Naive thymus-derived CD8-positive, alpha-beta T cell (primary cell): ENCODE measurements at regions of chr12 and their contacts with region 1.

Region 1: DNA sequence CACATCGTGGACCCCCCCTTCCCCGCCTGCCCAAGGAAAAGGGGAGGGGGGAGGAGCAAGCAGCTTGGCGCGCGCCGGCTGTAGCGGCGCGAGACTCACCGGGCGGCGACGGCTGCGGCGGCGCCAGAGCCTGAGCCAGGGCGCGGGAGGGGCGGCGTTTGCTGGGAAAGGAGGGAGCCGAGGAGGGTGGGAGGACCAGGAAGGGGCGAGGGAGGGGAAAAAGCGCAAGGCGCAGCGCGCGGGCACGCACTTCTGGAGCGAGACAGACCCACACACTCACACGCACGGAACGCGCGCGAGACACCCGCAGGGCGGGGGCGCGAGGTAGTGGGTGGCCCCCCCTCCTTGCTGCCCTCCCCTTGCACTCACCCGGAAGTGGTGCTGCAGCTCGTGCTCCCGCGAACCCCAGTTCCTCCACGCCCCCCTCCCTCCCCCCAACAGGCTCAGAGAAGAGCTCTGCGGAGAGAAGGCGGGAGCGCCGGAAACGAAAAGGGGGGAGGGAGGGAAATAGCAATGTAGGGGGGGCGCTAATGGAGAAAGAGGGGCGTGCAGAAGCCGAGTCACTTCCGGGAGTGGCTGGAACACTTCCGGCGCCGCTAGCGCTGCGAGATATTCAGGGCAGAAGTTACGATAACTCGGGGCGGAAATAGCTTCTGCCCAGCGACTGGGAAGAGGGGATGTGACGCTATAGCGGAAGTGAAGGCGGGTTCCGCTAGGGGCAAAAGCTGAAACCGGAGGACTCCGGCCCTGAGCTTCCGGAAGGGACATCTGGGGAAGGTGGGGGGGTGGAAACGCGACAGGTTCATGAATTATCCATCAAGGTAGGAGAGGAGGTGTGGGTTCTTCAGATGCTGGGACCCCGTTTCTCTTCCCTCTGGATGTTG is at the start of gene ZNF384:
- DNase-seq: peak; percentile 85 to 98 (median 96)
- ATAC-seq: peak; percentile 78 to 83
- H3K4me3 Mint-ChIP-seq: peak within 1 kb of the TSS; percentile 81 to 97 (median 92)
- H3K27ac Mint-ChIP-seq: peak within 1 kb of the TSS; percentile 89 to 99 (median 96)
- H3K4me1 Mint-ChIP-seq: peaks cover 36 to 67% (median 58%) of the 10 kb centered on the region in 4 donors
- H3K27me3 Mint-ChIP-seq: no peaks in the 10 kb centered on the region
- polyA plus RNA-seq, gene ZNF384: 17.6 to 39.6 (median 26.3) TPM

Region 2: DNA sequence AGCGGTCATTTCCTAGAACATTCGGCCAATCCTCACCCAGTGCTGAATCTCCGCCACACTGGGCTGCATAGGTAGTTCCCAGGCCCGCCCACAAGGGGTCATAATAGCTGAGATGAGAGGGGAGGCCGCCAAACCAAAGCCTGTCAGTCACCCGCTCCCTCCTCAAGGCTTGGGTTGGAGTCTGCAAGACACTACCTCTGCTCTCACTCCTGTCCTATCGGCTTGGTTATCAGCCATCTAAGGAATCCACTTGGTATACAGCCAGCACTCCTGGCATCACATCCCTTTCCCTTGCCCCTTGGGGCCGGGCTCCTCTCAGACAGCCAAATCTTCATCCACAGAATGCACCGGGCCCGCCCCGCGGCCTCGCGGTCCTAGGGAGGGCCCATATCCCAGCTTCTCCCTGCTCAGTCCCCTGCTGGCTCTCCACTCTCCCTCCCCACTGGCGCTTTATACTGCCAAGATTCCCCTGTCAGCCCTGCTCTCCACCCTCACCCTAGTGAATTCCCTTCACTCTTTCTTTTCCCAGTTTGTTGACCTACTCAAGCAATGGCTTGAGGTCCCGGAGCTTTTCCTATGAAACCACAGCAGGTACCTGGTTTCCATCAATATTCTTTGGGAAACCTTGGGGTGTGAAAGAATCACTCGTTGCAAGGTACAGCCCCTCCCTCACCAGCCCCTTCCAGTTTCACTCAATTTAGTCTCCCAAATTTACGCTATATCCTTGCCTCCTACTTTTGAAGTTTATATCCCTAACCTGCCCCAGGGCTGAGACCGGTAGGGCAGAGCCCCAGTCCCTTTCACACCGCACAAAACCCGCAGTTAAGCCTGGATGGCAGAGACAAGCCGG is 134.8 kb before region 1 on chr12:
- POLR2A ChIA-PET with region 1: interaction called, 11 read pairs
- DNase-seq: peak; percentile 38 to 82 (median 58)
- ATAC-seq: peak; percentile 45 to 60
- H3K4me3 Mint-ChIP-seq: peak overlapping the region; percentile 77 to 93 (median 86)
- H3K27ac Mint-ChIP-seq: peak overlapping the region in 9 of 10 donors; percentile 8 to 91 (median 70)
- H3K4me1 Mint-ChIP-seq: peaks cover 34 to 54% (median 49%) of the 10 kb centered on the region in 4 donors
- H3K27me3 Mint-ChIP-seq: no peaks in the 10 kb centered on the region

Region 3: GRCh38 chr12:6613776-6614512 is 75.3 kb before region 1 on chr12:
- POLR2A ChIA-PET with region 1: interaction called, 19 read pairs
- DNase-seq: peak in 8 of 10 donors; percentile 33 to 81 (median 51)
- ATAC-seq: peak; percentile 24 to 45
- H3K4me3 Mint-ChIP-seq: peak overlapping the region in 8 of 10 donors; percentile 9 to 81 (median 63)
- H3K27ac Mint-ChIP-seq: peak overlapping the region; percentile 54 to 97 (median 88)
- H3K4me1 Mint-ChIP-seq: peaks cover 36 to 65% (median 61%) of the 10 kb centered on the region in 4 donors
- H3K27me3 Mint-ChIP-seq: no peaks in the 10 kb centered on the region

Region 4: DNA sequence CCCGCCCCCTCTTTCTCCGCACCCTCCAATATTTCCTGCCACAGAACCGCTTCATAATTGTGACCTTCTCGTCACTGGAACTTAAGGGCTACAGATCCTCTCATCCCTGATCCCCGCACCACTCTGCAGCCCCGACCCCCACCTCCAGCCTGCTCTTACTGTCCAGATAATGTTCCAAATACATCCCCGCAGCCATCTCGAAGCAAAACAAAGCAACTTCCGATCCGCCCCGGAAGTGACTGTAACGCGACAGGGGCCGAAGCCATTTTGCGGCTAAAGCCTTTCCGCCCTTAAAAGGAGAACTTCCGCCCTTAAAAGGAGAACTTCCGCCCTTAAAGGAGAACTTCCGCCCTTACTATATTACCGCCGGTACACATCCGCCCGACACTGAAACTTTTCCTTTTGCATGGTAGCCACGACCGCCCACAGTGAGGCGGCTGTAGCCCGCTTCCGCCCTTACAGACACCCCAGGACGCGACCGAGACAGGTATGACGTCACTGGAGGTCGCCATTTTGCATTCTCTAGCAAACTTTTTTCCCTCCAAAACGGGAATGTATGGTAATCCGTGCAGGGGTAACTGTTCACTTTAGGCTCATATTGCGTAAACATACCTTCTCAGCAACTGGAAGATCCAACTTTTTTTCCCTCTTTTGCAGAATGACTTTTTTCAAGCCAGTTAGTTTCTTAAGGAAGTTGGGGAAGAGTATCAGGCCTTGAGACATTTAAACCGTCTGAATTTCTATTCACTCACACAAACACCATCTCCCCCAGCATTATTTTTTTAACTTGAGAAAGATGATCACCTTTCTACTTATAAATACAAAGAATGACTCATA is 26.1 kb before region 1 on chr12 and contains the start of gene ING4:
- POLR2A ChIA-PET with region 1: interaction called, 40 read pairs
- DNase-seq: peak; percentile 83 to 99 (median 97)
- ATAC-seq: peak; percentile 98 to 99
- H3K4me3 Mint-ChIP-seq: peak within 1 kb of the TSS; percentile 89 to 100 (median 93)
- H3K27ac Mint-ChIP-seq: peak within 1 kb of the TSS; percentile 91 to 100 (median 97)
- H3K4me1 Mint-ChIP-seq: peaks cover 18 to 42% (median 35%) of the 10 kb centered on the region in 4 donors
- H3K27me3 Mint-ChIP-seq: no peaks in the 10 kb centered on the region
- polyA plus RNA-seq, gene ING4: 89.5 to 99.6 (median 90.6) TPM

Region 5: GRCh38 chr12:6752921-6753771 is 63.9 kb after region 1 on chr12 and contains the start of gene MLF2:
- POLR2A ChIA-PET with region 1: interaction called, 37 read pairs
- DNase-seq: peak; percentile 93 to 98 (median 96)
- ATAC-seq: peak; percentile 92 to 95
- H3K4me3 Mint-ChIP-seq: peak within 1 kb of the TSS; percentile 92 to 98 (median 94)
- H3K27ac Mint-ChIP-seq: peak within 1 kb of the TSS; percentile 95 to 100 (median 98)
- H3K4me1 Mint-ChIP-seq: peaks cover 11 to 36% (median 24%) of the 10 kb centered on the region in 4 donors
- H3K27me3 Mint-ChIP-seq: peaks cover 0 to 2% (median 0%) of the 10 kb centered on the region in 5 donors
- polyA plus RNA-seq, gene MLF2: 98.5 to 133 (median 126) TPM

Region 6: GRCh38 chr12:6778574-6779550 is 89.6 kb after region 1 on chr12:
- POLR2A ChIA-PET with region 1: no interaction called
- DNase-seq: peak; percentile 73 to 93 (median 84)
- ATAC-seq: peak; percentile 85 to 94
- H3K4me3 Mint-ChIP-seq: peak overlapping the region; percentile 80 to 93 (median 87)
- H3K27ac Mint-ChIP-seq: peak overlapping the region; percentile 0 to 91 (median 76)
- H3K4me1 Mint-ChIP-seq: peaks cover 20 to 29% (median 28%) of the 10 kb centered on the region in 4 donors
- H3K27me3 Mint-ChIP-seq: peaks cover 7 to 36% (median 21%) of the 10 kb centered on the region in 5 donors

Region 7: GRCh38 chr12:6834873-6835272 is 145.6 kb after region 1 on chr12:
- POLR2A ChIA-PET with region 1: no interaction called
- DNase-seq: no peak
- ATAC-seq: no peak
- H3K4me3 Mint-ChIP-seq: no peak overlapping the region
- H3K27ac Mint-ChIP-seq: peak overlapping the region in 1 of 10 donors; percentile 41
- H3K4me1 Mint-ChIP-seq: peaks cover 0 to 7% (median 4%) of the 10 kb centered on the region in 4 donors
- H3K27me3 Mint-ChIP-seq: peaks cover 0 to 9% (median 0%) of the 10 kb centered on the region in 5 donors

Region 8: GRCh38 chr12:6861391-6861790 is 172.2 kb after region 1 on chr12:
- POLR2A ChIA-PET with region 1: no interaction called
- DNase-seq: no peak
- ATAC-seq: no peak
- H3K4me3 Mint-ChIP-seq: no peak overlapping the region
- H3K27ac Mint-ChIP-seq: peak overlapping the region in 2 of 10 donors; percentile 57 to 76
- H3K4me1 Mint-ChIP-seq: peaks cover under 1 to 13% (median 5%) of the 10 kb centered on the region in 4 donors
- H3K27me3 Mint-ChIP-seq: no peaks in the 10 kb centered on the region

Region 9: GRCh38 chr12:6944381-6945186 is 255.3 kb after region 1 on chr12:
- POLR2A ChIA-PET with region 1: interaction called, 11 read pairs
- DNase-seq: peak; percentile 65 to 94 (median 84)
- ATAC-seq: peak; percentile 49 to 55
- H3K4me3 Mint-ChIP-seq: peak overlapping the region; percentile 93 to 99 (median 98)
- H3K27ac Mint-ChIP-seq: peak overlapping the region; percentile 97 to 100 (median 99)
- H3K4me1 Mint-ChIP-seq: peaks cover 32 to 78% (median 66%) of the 10 kb centered on the region in 4 donors
- H3K27me3 Mint-ChIP-seq: no peaks in the 10 kb centered on the region

Region 10: DNA sequence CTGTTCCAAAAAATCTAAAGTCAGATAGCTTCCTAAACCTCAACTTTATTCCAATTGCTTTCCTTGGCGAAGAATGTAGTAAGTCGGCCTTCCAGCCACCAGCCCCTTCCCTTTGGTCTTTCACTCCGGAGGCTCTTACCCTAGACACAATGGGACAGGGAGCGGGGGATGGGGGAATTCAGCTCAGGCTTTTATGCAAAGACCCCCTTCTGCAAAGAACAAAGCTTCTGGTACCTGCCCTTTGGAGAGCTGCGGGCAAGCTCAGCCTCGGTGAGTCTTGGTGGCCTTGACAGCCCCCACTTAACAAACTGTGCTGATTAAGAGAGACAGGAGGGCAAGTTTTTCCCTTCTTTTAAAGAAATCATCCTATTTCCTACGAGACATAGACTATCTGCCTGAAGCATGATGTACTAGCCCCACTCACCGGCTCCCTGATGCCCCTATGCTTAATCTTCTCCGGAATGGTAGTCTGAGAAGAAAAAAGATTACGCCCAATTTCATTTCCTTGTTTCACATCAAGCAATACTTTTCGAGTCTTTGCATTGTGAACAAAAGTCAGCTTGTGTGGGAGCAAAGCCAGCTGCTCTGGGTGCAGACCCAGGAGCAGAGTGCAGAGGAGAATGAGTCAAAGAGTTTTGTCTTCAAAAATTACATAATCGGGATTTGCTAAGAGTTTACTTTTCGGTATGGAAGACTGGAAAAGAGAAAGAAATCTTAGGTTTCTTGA is 1098.5 kb after region 1 on chr12:
- POLR2A ChIA-PET with region 1: no interaction called
- DNase-seq: no peak
- ATAC-seq: no peak
- H3K4me3 Mint-ChIP-seq: no peak overlapping the region
- H3K27ac Mint-ChIP-seq: no peak overlapping the region
- H3K4me1 Mint-ChIP-seq: peaks cover 0 to 6% (median 0%) of the 10 kb centered on the region in 4 donors
- H3K27me3 Mint-ChIP-seq: peaks cover 0 to 18% (median 8%) of the 10 kb centered on the region in 5 donors